HEK293 (cell line): ENCODE measurements at regions of chr18 and their contacts with region 1.

Region 1: DNA sequence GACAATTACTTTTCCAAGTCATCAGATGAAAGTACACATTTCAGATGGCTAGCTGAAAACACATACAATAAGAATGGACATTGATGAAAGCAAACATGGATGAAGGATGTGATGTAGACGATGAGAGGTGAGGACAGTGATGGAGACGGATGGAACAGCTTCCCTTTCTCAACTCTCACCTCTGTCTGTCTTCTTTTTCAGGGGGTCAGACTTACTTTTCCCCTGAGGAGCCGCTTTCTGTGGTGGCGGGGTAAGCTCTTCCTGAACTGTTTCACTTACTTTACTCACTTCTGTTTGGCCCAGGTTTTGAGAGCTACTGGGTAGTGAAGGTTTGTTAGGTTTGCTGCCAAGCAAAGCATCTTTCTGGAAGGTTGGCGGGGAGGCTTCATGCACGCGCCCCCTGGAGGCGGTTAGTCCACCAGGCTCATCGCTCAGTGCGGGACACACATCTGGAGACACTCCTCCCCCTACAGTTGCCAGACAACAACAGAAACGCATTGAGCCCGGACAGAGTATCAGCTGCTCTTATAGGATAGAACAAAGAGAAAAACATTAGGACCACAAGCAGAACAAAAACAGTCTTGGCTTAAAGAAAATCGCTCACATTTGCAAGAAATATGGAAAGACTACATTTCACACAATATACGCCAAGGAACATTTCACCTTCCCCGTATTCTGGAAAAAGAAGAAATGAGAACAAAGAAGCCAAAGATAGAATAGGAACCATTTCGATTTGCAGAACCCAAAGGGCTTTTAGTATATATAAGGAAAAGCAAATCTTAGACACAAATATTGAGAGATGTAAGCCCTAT is 90.5 kb downstream of the MYOM1 start:
- H3K4me3 ChIP-seq: no peak overlapping the region
- H3K27ac ChIP-seq: no peak overlapping the region
- H3K4me1 ChIP-seq: no peaks in the 10 kb centered on the region
- CTCF ChIP-seq: peak; percentile 88

Region 2: DNA sequence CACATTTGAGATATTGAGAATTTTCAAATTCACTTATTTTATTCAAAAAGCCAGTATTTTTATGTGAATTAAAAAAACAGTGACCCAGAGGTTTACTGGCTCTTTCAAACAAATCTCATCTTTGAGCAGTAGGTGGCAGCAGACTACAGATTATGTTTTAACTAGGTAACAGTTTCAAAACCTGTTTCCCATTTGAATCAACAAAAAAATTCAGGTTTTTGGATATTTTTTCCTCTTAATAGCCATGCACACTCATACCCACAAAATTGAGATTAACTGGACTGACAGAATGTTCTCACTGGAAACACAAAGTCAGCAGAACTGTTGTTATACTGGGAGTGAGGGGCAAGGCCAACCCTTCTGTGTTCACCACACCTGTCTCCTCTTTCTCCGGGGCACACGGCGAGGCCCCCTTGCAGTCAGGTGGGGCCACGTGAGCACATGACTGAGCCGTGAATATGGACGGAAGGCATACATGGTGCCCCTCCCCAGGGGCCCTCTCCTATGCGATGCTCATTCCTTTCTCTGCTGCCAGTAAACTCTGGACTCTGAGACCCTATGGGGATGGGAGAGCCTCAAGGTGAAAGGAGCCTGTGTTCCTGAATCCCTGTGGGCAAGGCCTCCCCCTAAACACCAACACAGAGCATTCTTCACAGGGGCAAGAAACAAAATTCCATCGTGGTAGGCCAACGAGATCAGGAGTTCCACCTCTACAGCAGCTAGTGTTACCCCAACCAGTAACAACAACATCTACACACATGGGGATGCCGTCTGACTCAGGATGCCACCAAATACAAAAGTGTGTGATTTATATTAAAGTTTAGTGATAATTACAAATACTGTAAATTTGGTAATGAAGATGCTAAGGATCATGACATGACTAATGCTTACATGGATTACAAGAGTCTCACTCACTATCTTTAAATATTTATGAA is 196.7 kb before region 1 on chr18:
- CTCF ChIA-PET with region 1: interaction called, 11 read pairs
- POLR2A ChIA-PET with region 1: no interaction called
- H3K4me3 ChIP-seq: no peak overlapping the region
- H3K27ac ChIP-seq: no peak overlapping the region
- H3K4me1 ChIP-seq: no peaks in the 10 kb centered on the region
- CTCF ChIP-seq: peak; percentile 33; the same call in 1 of the 2 replicates

Region 3: DNA sequence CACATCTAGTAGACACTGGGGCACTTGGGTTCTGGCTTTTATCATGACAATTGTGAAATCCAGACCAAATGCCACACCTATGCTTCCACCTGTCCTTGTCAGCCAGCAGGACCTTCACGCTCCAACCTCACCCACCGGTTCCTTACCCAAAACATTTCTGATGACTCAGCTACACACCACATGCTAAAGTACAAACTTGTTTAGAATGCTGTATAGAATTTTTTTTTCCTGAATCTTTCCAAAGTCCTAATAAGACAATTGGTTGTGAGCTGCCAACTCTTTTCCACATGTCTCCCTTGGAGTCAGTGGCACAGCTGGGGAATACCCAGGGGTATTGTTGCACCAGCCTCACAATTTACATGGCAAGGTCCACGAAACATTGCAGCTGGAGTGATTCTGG is 40.8 kb before region 1 on chr18:
- CTCF ChIA-PET with region 1: interaction called, 22 read pairs
- POLR2A ChIA-PET with region 1: no interaction called
- H3K4me3 ChIP-seq: no peak overlapping the region
- H3K27ac ChIP-seq: no peak overlapping the region
- H3K4me1 ChIP-seq: peaks cover 8% of the 10 kb centered on the region; the same call in 1 of the 2 replicates
- CTCF ChIP-seq: no peak

Region 4: GRCh38 chr18:3140986-3141639 is 11.9 kb after region 1 on chr18:
- CTCF ChIA-PET with region 1: interaction called, 21 read pairs
- POLR2A ChIA-PET with region 1: no interaction called
- H3K4me3 ChIP-seq: no peak overlapping the region
- H3K27ac ChIP-seq: no peak overlapping the region
- H3K4me1 ChIP-seq: no peaks in the 10 kb centered on the region
- CTCF ChIP-seq: no peak

Region 5: GRCh38 chr18:3194947-3195612 is 65.8 kb after region 1 on chr18:
- CTCF ChIA-PET with region 1: interaction called, 10 read pairs
- POLR2A ChIA-PET with region 1: no interaction called
- H3K4me3 ChIP-seq: no peak overlapping the region
- H3K27ac ChIP-seq: no peak overlapping the region
- H3K4me1 ChIP-seq: no peaks in the 10 kb centered on the region
- CTCF ChIP-seq: no peak